Left cardiac atrium (tissue), 4 donors: ENCODE measurements at regions of chr4 and their contacts with region 1.

Region 1: DNA sequence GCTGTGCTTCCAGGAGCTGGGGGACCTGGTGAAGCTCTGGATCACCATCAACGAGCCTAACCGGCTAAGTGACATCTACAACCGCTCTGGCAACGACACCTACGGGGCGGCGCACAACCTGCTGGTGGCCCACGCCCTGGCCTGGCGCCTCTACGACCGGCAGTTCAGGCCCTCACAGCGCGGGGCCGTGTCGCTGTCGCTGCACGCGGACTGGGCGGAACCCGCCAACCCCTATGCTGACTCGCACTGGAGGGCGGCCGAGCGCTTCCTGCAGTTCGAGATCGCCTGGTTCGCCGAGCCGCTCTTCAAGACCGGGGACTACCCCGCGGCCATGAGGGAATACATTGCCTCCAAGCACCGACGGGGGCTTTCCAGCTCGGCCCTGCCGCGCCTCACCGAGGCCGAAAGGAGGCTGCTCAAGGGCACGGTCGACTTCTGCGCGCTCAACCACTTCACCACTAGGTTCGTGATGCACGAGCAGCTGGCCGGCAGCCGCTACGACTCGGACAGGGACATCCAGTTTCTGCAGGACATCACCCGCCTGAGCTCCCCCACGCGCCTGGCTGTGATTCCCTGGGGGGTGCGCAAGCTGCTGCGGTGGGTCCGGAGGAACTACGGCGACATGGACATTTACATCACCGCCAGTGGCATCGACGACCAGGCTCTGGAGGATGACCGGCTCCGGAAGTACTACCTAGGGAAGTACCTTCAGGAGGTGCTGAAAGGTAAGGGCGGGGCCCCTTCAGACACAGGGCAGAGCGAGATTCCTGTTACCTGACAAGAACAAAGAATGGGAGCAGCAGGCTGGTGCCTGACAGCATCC is 11.8 kb downstream of the RPL9 start:
- DNase-seq: peak; percentile 72
- ATAC-seq: peak; percentile 83 to 85

Region 2: DNA sequence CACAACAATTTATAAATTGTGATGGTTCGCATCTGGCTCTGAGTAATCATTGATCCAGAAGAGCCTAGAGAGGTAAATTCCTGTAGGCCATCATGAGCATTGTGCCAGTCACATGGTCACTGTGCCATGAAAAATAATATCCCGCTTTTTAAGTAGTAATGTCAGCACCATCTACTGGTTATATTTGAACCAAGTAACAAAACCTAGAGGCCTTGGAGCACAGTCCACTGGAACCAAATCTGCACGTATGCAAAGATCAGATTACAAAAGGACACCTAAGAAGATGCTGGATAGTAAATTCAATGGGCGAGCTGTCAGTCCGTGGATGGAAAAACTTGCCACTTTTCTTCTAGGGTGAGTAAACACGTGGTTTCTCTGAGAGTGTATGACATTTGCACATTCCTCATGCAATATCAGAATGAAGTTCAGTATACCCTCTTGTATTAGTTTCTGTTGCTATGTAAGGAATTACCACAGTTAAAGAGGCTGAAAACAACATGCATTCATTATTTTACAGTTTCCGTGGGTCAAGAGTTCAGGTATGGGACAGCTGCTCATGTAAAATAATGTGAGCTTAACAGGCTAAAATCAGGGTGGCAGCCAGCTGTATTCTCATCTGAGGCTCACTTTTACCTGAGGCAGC is 552.5 kb before region 1 on chr4:
- intact Hi-C with region 1: loop called in 1 of 2 experiments (anchors 10 kb)
- DNase-seq: no peak
- ATAC-seq: no peak

Region 3: GRCh38 chr4:39227906-39228305 is 219.1 kb before region 1 on chr4:
- intact Hi-C with region 1: no loop called
- DNase-seq: no peak
- ATAC-seq: no peak

Region 4: DNA sequence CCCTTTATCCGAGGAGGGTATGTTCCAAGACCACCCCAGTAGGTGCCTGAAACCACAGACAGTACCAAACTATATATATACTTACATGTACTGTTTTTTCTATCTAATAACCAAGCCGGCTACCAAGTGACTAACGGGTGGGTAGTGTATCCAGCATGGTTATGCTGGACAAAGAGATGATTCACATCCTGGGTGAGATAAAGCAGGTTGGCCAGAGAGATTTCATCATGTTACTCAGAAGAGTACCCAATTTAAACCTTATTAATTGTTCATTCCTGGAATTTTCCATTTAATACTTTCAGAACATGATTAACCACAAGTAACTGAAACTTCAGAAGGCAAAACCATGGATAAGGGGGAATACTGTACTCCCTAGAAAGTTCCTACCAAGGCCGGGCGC is 127.3 kb before region 1 on chr4:
- intact Hi-C with region 1: loop called in 1 of 2 experiments (anchors 10 kb)
- DNase-seq: no peak
- ATAC-seq: peak in 1 of 2 donors; percentile 86

Region 5: DNA sequence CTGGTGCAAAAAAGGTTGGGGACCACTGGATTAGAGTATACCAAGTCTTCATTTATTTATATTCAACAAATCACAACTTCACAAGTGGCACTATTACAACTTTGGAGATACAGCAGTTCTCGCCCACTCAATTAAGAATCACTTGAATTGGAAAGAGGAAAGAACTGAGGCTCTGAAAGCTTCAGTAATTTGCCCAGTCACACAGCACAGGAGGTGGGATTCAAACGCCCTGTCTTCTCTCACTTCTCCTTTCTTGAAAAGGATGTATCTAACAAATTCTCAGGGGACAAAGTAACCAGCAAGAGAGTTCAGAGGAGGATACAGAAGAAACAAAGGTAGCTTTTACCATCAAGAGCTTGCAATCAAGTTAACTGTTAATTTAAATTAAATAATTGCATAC is 179.3 kb after region 1 on chr4:
- intact Hi-C with region 1: no loop called
- DNase-seq: no peak
- ATAC-seq: no peak